ENCODE measurements at regions of chr2 and their contacts with region 1.

Region 1: DNA sequence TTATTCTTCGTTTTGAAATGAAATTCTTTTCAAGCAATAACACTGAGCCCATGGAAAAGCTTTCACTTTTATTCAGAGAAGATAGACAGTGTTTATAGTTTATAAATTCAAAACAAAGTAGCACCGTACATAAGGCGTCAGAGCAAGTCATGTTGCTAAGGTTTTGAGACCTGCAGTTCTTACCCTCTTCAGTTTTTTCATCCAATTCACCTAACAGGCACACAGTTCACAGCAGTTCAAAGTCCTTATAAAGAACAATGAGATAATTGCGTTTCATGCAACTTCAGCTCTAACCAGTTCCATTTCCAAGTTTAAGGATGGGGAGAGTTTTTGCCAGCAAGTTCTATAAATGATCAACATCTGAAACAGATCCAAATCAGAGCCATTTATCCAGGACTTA is 96.7 kb downstream of the ARHGAP15 start:
- DNase-seq: no peak
- H3K4me3 ChIP-seq: no peak overlapping the region
- H3K27ac ChIP-seq: no peak overlapping the region
- H3K4me1 ChIP-seq: no peaks in the 10 kb centered on the region
- H3K27me3 ChIP-seq: no peaks in the 10 kb centered on the region
- CTCF ChIP-seq: no peak
- POLR2A ChIP-seq: no peak

Region 2: DNA sequence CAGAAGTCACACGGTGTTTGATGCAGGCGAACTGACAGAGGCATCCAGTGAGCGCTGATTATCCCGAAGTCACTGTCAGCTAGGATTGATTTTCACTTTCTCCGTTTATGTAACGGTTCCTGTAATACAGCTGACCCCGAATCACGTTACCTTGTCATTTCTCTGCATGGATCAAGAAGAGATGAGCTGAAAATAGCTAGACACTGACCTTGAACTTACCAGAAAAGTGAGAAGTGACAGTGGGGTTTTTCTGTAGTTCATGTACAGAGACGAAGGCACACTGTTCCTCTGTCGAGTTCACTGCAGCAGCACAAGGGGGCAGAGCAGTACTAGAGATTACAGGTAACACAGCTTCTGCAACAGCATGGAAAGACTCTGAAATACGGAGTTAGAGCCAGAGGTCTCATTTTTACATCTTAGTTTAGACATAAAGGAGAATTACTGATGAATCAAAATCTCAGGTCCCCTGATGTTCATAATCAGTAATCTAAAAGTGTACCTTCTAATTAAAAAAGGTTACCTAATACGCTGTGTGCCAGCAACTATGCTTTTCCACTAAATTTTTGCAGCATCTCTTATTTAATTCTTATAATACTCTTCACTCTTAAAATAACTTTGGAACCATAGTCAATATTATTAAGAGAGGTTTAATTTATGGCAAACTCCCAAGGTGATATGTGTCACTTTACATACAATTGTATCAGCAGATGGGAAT is 63.7 kb before region 1 on chr2:
- CTCF ChIA-PET with region 1: interaction called, 11 read pairs
- POLR2A ChIA-PET with region 1: no interaction called
- dilution Hi-C with region 1: no loop called
- intact Hi-C with region 1: loop called (anchors 2 kb)
- DNase-seq: peak; percentile 17
- H3K4me3 ChIP-seq: no peak overlapping the region
- H3K27ac ChIP-seq: no peak overlapping the region
- H3K4me1 ChIP-seq: no peaks in the 10 kb centered on the region
- H3K27me3 ChIP-seq: peaks cover 6% of the 10 kb centered on the region in 2 experiments
- CTCF ChIP-seq: peak; percentile 19 to 44
- POLR2A ChIP-seq: no peak

Region 3: GRCh38 chr2:143452817-143453451 is 227.0 kb after region 1 on chr2:
- CTCF ChIA-PET with region 1: no interaction called
- POLR2A ChIA-PET with region 1: no interaction called
- dilution Hi-C with region 1: no loop called
- intact Hi-C with region 1: no loop called
- DNase-seq: no peak
- H3K4me3 ChIP-seq: no peak overlapping the region
- H3K27ac ChIP-seq: no peak overlapping the region
- H3K4me1 ChIP-seq: peaks cover 11% of the 10 kb centered on the region
- H3K27me3 ChIP-seq: no peaks in the 10 kb centered on the region
- CTCF ChIP-seq: no peak
- POLR2A ChIP-seq: no peak

Region 4: GRCh38 chr2:143499061-143499460 is 273.1 kb after region 1 on chr2:
- CTCF ChIA-PET with region 1: no interaction called
- POLR2A ChIA-PET with region 1: no interaction called
- dilution Hi-C with region 1: no loop called
- intact Hi-C with region 1: no loop called
- DNase-seq: no peak
- H3K4me3 ChIP-seq: no peak overlapping the region
- H3K27ac ChIP-seq: no peak overlapping the region
- H3K4me1 ChIP-seq: no peaks in the 10 kb centered on the region
- H3K27me3 ChIP-seq: no peaks in the 10 kb centered on the region
- CTCF ChIP-seq: no peak
- POLR2A ChIP-seq: no peak

Measured in endothelial cell of umbilical vein (primary cell).